Transverse colon (tissue), 4 donors: ENCODE measurements at regions of chr7 and their contacts with region 1.

Region 1: DNA sequence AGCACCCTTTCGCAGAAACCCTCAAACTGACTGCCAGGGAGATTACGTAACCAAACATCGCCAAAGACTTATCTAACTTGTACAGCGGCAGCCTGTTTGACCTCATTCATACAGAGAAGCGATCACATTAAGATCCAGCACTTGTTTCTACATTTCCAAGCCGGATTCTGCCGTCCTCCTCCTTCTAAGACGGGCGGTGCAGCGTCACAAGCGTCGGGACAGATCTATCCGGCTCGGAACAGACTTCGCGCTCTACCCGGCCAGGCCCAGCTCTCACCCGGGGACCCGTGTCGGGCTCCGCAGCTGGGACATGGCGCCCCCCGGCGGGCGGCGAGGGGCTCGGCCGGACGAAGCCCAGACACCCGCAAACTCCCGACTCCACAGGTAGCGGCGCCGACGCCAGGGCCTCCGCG is 373 bp downstream of the H2AZ2 start:
- DNase-seq: peak; percentile 91
- H3K4me3 ChIP-seq: peak overlapping the region; percentile 62 to 86 (median 71)
- H3K27ac ChIP-seq: peak overlapping the region; percentile 95 to 98 (median 96)
- H3K4me1 ChIP-seq: peaks cover 9 to 41% (median 22%) of the 10 kb centered on the region in 4 donors
- H3K27me3 ChIP-seq: no peaks in the 10 kb centered on the region
- CTCF ChIP-seq: peak; percentile 77 to 90 (median 87)
- EP300 ChIP-seq: no peak
- POLR2A ChIP-seq: peak; percentile 59

Region 2: DNA sequence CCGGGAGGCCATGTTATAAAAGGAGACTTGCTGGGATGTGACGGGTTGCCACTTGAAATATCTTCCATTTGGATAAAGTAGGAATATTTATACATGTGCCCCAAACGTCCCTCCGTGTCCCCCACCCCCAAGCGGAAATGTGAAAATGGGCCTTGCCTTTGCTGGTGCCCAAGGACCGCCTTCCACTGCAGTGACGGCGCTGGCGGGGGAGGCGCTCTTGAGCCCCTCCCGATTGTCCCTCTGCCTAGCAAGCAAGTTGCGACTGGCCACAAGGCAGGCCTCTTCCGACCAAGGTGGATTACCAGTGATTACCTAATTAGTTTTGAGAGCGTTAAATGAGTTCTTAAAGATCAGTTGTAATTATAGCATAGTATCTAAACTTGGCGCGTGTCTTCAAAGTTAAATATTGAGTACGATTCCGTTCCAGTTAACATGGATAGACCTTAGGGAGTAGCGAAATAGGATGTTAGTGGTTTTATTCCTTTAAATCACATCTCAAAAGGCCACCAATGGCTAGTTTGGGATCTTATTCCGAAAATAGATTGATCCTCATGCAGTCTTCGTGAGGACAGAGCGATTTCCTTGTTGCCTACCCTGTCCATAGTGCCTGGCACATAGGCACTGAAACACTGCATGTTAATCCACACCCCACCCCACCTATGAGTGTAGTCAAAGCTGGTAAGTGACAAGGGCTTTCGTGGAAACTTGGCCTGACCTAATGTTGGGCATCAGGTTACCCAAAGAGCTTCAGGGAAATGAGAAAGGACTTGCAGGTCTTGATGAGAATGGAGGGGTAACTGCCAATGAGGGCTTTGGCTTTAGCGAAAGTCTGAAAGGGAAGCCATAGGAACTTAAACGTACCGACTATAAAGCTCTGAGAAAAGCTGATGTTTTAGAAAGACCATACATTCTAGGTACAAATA is 49.9 kb before region 1 on chr7:
- in situ Hi-C with region 1: loop called in 1 of 4 experiments (anchors 10 kb)
- intact Hi-C with region 1: no loop called
- DNase-seq: peak; percentile 93
- H3K4me3 ChIP-seq: peak overlapping the region; percentile 79 to 94 (median 82)
- H3K27ac ChIP-seq: peak overlapping the region; percentile 99 to 100 (median 100)
- H3K4me1 ChIP-seq: peaks cover 8 to 28% (median 22%) of the 10 kb centered on the region in 4 donors
- H3K27me3 ChIP-seq: no peaks in the 10 kb centered on the region
- CTCF ChIP-seq: peak; percentile 39 to 51 (median 47)
- EP300 ChIP-seq: no peak
- POLR2A ChIP-seq: peak; percentile 37

Region 3: GRCh38 chr7:44885394-44886317 is 38.1 kb after region 1 on chr7 and contains the start of gene PURB:
- in situ Hi-C with region 1: no loop called
- intact Hi-C with region 1: loop called (anchors 2 kb)
- DNase-seq: peak; percentile 96
- H3K4me3 ChIP-seq: peak within 1 kb of the TSS; percentile 82 to 97 (median 89)
- H3K27ac ChIP-seq: peak within 1 kb of the TSS; percentile 98 to 100 (median 98)
- H3K4me1 ChIP-seq: peaks cover 16 to 48% (median 43%) of the 10 kb centered on the region in 4 donors
- H3K27me3 ChIP-seq: no peaks in the 10 kb centered on the region
- CTCF ChIP-seq: no peak
- EP300 ChIP-seq: peak; percentile 30
- POLR2A ChIP-seq: peak; percentile 96
- total RNA-seq, gene PURB: 13.1 to 26.2 (median 20.4) TPM